ENCODE measurements at regions of chr16 and their contacts with region 1.

Region 1: GRCh38 chr16:87778830-87779579 is 13.2 kb upstream of the KLHDC4 start:
- DNase-seq: peak; percentile 92
- H3K4me3 Mint-ChIP-seq: peak overlapping the region; percentile 77
- H3K27ac Mint-ChIP-seq: peak overlapping the region; percentile 94
- H3K4me1 Mint-ChIP-seq: peaks cover 53% of the 10 kb centered on the region
- H3K27me3 Mint-ChIP-seq: no peaks in the 10 kb centered on the region

Region 2: DNA sequence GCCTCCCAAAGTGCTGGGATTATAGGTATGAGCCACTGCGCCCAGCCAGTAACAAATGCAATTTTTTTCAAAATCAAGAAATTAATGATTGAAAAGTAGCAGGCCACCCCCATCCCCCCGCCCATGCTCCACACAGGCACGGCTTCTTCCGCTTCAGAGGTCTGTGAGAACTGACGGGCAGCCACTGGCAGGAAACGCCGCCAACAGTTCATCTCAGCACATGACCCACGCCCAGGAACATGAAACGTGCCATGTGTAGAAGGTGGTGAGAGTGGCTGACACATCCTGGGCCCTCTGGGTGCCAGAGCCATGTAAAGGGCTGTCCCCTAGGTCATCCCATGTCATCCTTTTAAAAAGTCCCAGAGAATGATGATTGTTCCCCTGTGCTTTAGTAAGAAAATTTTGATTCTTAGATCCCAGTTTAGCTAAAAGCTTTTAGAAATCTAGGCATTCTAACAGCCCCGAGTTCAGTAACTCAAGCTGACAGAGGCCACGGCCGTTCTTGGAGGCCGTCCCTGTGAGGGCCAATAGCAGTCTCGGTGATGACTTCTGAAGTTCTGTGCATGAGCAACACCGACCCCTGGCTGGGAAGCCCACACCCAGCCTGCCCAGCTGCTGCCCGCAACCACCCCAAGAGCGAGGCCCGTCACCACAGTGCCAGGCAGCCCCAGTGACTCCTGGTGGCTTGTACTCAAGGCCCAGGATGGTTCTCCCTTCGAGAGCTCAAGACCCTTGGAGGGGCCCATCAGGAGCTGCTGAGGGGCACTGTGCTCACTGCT is 65.4 kb before region 1 on chr16:
- intact Hi-C with region 1: no loop called
- DNase-seq: peak; percentile 33
- H3K4me3 Mint-ChIP-seq: no peak overlapping the region
- H3K27ac Mint-ChIP-seq: no peak overlapping the region
- H3K4me1 Mint-ChIP-seq: peaks cover 4% of the 10 kb centered on the region
- H3K27me3 Mint-ChIP-seq: no peaks in the 10 kb centered on the region

Region 3: DNA sequence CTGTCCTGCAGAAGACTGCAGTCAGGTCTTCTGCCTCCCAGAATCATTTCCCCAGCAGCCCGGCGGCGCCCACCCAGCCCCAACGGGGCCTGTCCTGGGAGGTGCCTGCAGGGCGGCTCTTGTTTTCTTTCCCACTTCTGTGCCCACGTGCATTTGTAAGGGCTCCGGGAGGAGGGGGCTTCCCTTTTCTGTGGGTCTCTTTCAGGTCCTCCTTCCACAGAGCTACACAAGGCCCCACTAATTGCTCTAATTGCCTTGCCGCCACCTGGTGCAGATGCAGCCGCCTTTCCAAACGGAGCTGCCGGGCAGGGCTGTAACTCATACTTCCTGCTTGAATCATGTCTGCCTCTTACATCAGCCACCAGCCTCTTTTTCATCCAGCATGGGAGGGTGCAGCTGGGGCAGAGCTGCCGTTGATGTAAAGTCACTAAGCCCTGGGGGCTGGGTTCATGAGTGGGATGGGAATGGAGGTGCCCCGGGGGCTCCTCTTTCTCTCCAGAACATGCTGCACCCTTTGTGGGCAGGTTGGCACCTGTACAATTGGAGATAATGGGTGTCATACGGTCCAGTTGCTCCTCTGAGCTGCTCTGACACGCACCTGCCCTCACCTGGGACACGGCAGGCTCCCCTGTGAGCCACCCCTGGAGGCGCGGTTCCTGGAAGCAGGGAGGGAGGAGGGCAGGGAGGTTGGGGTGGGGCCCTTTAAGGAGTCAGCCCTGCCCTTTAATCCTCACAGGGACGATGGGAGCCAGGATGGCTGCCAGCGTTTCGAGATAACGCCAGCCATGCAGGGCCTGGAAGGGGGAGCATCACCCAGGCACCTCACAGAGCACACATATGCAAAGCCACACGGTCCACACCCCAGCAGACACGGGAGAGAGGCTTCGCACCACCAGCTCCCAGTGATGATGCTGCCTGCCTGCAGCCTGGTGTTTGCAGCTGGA is 27.9 kb after region 1 on chr16:
- intact Hi-C with region 1: no loop called
- DNase-seq: peak; percentile 44
- H3K4me3 Mint-ChIP-seq: peak overlapping the region; percentile 81
- H3K27ac Mint-ChIP-seq: peak overlapping the region; percentile 93
- H3K4me1 Mint-ChIP-seq: peaks cover 32% of the 10 kb centered on the region
- H3K27me3 Mint-ChIP-seq: no peaks in the 10 kb centered on the region

Region 4: GRCh38 chr16:87828071-87828971 is 49.3 kb after region 1 on chr16:
- intact Hi-C with region 1: loop called (anchors 5 kb)
- DNase-seq: no peak
- H3K4me3 Mint-ChIP-seq: no peak overlapping the region
- H3K27ac Mint-ChIP-seq: no peak overlapping the region
- H3K4me1 Mint-ChIP-seq: no peaks in the 10 kb centered on the region
- H3K27me3 Mint-ChIP-seq: no peaks in the 10 kb centered on the region

Region 5: DNA sequence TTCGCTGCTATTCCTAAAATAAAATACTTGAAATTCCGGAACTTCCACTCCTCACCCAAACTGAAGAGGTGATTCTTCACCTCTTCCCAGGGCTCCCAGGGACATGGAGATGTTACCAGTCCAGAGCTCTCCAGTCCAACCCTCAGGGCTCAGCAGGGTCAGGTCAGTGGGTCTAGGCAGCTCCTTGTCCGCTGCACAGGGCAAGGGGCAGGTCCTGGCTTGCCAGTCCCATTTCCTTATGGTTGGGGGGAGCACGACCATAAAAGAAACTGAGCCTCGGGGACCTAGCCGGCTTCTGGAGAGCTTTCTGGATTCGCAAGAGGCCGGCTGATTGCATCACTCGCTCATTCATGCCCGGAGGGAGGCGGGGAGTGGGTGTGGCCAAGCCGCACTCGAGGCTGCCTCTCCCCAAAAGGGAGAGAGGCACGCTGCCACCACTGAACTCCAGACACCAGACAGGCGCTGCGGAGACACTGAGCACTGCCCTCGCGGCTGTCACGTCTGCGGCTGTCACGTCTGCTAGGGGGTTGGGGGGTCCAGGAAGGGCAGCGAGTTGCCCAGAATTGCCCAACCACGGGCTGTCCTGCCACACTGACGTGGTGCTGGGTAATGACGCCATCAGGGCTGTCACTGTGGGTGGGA is 74.5 kb after region 1 on chr16:
- intact Hi-C with region 1: loop called (anchors 1 kb)
- DNase-seq: peak; percentile 86
- H3K4me3 Mint-ChIP-seq: peak overlapping the region; percentile 64
- H3K27ac Mint-ChIP-seq: peak overlapping the region; percentile 83
- H3K4me1 Mint-ChIP-seq: peaks cover 54% of the 10 kb centered on the region
- H3K27me3 Mint-ChIP-seq: no peaks in the 10 kb centered on the region

Region 6: GRCh38 chr16:87895641-87896141 is 116.7 kb after region 1 on chr16:
- intact Hi-C with region 1: loop called (anchors 1 kb)
- DNase-seq: peak; percentile 81
- H3K4me3 Mint-ChIP-seq: peak overlapping the region; percentile 73
- H3K27ac Mint-ChIP-seq: peak overlapping the region; percentile 100
- H3K4me1 Mint-ChIP-seq: peaks cover 50% of the 10 kb centered on the region
- H3K27me3 Mint-ChIP-seq: no peaks in the 10 kb centered on the region

Region 7: GRCh38 chr16:87950765-87951549 is 172.0 kb after region 1 on chr16 and contains the start of gene BANP:
- intact Hi-C with region 1: loop called (anchors 2 kb)
- DNase-seq: peak; percentile 96
- H3K4me3 Mint-ChIP-seq: peak within 1 kb of the TSS; percentile 94
- H3K27ac Mint-ChIP-seq: peak within 1 kb of the TSS; percentile 99
- H3K4me1 Mint-ChIP-seq: peaks cover 46% of the 10 kb centered on the region
- H3K27me3 Mint-ChIP-seq: no peaks in the 10 kb centered on the region
- total RNA-seq, gene BANP: 39.7 and 40.8 TPM in 2 replicates

Region 8: GRCh38 chr16:88437373-88437964 is 658.5 kb after region 1 on chr16:
- intact Hi-C with region 1: loop called (anchors 10 kb)
- DNase-seq: peak; percentile 45
- H3K4me3 Mint-ChIP-seq: no peak overlapping the region
- H3K27ac Mint-ChIP-seq: no peak overlapping the region
- H3K4me1 Mint-ChIP-seq: no peaks in the 10 kb centered on the region
- H3K27me3 Mint-ChIP-seq: no peaks in the 10 kb centered on the region

Measured in activated T-helper 2 cell treated with anti-CD3 and anti-CD28 coated beads, Interferon-gamma antibody, Interleukin-2, Interleukin-4, amounts not matched to agents 10 μg/mL and 5 μg/mL and 100 μg/mL, durations not matched to agents 14 hours and 24 hours and 36 hours (primary cell).